Right ventricle myocardium superior (tissue), 1 donor: ENCODE measurements at regions of chr19 and their contacts with region 1.

Region 1: GRCh38 chr19:29860492-29860891 is 48.7 kb downstream of the CCNE1 start:
- DNase-seq: no peak
- ATAC-seq: no peak

Region 2: GRCh38 chr19:29953352-29954247 is 93.1 kb after region 1 on chr19:
- intact Hi-C with region 1: no loop called
- DNase-seq: no peak
- ATAC-seq: no peak

Region 3: DNA sequence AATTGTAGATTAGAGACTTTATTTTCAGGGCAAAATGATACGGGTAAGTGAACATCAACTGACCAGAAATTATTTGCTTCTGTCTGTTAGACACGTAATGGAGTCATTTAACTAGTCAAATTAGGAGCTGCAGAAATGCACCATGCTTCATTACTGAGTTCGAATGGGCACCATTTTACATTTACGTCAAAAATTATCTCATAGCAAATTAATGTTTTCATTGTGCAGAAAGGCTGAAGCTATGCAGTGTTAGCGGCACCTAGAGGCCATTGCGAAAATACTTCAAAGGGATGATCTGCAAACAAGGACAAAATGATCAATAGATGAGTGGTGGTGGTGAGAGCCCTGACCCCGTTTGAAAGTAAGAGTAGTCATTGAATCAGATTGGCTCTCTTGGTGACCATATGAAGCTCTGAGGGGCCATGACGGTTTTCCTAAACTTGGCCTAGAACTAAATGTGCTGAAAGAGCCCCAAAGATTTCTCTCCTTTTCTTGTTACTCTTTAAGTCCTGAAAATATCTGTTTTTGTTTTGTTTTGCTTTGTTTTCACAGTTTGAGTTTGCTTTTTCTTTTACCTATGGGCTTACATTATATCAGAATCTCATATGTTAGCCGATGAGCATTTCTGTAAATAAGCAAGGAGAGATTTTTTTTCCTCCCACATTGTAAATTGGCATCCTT is 789.6 kb after region 1 on chr19:
- intact Hi-C with region 1: loop called (anchors 10 kb)
- DNase-seq: no peak
- ATAC-seq: peak; percentile 45